GM23248 (cell line): ENCODE measurements at regions of chr6 and their contacts with region 1.

Region 1: DNA sequence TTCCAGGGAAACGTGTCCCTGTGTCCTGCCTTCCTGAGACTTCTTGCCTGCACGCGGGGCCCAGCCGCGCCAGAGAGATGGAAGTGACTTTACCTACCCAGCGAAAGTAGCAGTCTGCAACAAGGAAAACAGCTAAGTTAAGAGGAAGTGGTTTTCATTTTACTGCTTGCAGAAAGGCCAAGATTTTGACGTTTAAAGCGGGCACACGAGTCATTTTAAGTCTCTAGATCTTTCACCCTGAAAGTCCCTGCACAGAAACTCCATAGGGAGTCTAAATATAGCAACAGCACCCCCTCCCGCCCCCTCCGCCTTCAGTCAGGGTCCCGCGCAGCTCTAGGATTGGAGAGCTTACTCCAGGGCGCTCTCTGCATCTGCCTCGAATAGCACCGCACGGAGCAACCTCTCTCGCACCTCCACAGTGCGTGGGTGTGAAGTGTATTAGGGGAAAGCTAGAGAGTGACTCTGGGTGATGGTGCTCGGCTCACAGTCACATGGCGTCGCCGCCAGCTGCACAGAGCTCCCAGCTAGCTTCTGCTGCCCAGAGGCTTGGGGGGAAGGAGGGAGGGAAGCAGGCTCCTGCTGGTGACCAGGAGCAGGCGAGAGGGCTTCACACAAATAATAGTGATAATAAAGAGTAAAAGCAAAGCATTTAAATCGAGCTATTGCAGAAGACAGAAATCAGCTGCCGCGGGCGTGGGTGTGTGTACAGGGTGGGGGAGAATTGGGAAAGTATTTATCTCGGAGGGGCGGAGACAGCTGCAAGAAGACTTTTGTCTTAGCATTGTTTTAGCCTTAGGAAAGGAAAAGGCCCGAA is 1.8 kb upstream of the KCNQ5 start:
- DNase-seq: peak; percentile 80
- H3K4me3 ChIP-seq: peak overlapping the region; percentile 96
- H3K27ac ChIP-seq: no peak overlapping the region
- H3K4me1 ChIP-seq: peaks cover 13% of the 10 kb centered on the region
- H3K27me3 ChIP-seq: no peaks in the 10 kb centered on the region

Region 2: DNA sequence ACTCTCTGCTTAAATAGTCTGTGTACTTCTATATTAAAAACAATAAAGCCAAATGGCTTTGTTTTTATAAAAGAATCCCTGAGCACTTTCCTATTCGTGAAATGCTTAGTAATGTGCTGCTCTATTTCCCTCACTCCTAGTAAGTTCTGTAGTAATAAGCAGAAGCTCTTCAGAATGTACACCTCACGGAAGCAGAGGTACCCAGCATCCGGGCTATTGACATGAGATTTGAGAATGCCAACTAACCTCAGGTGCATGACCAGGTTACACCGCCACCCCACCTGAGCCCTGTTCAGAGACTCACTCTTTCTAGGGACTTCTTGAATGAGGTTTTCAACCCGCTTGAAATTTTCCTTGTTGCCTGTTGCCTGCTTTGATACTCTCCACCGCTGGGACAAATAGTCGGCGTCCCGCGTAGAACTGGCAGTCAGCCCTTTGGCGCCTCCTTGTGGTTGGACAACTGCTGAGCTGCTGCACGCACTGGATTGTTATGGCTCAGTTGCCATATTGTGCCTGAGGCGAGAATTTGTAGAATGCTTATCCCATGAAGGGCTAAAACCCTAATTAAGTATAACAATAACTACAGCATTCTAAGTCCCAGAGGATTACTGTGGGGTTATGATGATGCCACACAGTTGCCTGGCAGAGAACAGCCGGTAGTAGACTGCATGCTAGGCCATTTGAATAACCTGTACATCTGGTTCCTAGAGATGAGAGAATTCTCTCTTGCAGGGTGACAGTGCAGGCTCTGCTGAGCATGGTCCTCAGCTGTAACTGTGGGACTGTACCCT is 509.8 kb after region 1 on chr6:
- in situ Hi-C with region 1: loop called (anchors 10 kb)
- DNase-seq: peak; percentile 89
- H3K4me3 ChIP-seq: no peak overlapping the region; the same call in 1 of the 2 replicates
- H3K27ac ChIP-seq: no peak overlapping the region
- H3K4me1 ChIP-seq: no peaks in the 10 kb centered on the region
- H3K27me3 ChIP-seq: no peaks in the 10 kb centered on the region